ENCODE measurements at regions of chr12 and their contacts with region 1.

Region 1: GRCh38 chr12:122811777-122812176 is 23.5 kb upstream of the HIP1R start:
- DNase-seq: no peak
- H3K4me3 ChIP-seq: no peak overlapping the region
- H3K27ac ChIP-seq: no peak overlapping the region
- H3K4me1 ChIP-seq: peaks cover 13% of the 10 kb centered on the region
- CTCF ChIP-seq: no peak

Region 2: GRCh38 chr12:122834104-122834920 is 22.5 kb after region 1 on chr12:
- CTCF ChIA-PET with region 1: no interaction called
- POLR2A ChIA-PET with region 1: no interaction called
- intact Hi-C with region 1: loop called (anchors 2 kb)
- DNase-seq: no peak
- H3K4me3 ChIP-seq: peak overlapping the region; percentile 74
- H3K27ac ChIP-seq: peak overlapping the region; percentile 13
- H3K4me1 ChIP-seq: peaks cover 34% of the 10 kb centered on the region
- CTCF ChIP-seq: peak; percentile 38; the same call in 1 of the 2 replicates

Region 3: DNA sequence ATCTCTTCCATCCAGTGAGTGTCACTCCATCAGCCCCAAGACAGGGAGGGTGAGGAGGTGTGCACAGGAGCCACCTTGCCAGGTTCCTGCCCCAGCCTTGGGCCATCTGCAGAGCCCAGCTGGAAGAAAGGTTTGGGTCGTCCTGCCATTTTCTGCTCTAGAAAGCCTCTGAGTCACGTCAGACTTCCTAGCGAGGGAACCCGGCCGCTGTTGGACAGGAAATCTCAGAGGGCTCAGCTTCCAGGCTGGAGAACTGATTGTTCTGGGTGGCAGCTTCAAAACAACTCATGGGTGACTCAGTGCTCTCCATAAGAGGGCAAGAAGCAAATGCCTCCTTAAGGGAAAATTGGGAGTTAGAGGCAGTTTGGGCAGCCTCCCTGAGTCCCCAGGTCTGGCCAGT is 40.0 kb after region 1 on chr12:
- CTCF ChIA-PET with region 1: no interaction called
- POLR2A ChIA-PET with region 1: no interaction called
- intact Hi-C with region 1: no loop called
- DNase-seq: no peak
- H3K4me3 ChIP-seq: no peak overlapping the region
- H3K27ac ChIP-seq: no peak overlapping the region
- H3K4me1 ChIP-seq: no peaks in the 10 kb centered on the region
- CTCF ChIP-seq: no peak